ENCODE measurements at regions of chr19 and their contacts with region 1.

Region 1: DNA sequence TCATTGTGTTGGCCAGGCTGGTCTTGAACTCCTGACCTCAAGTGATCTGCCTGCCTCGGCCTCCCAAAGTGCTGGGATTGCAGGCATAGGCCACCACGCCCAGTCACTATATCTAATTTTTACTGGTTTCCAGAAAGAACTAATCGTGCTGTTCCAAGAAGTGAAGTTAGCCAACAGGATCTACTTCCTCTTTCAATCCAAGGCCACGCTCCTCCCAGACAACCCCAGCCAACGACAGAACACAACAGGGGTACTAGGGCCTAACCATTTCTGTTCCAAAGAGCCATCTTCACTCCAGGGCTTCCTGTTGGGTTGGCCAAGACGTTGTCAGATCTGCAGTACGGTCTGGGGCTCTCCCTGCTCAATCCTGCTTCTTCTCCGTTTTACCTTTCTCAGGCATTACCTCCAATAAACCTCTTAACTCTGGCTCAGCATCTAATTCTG is 7.0 kb upstream of the LSM14A start:
- DNase-seq: no peak
- ATAC-seq: no peak
- H3K4me3 ChIP-seq: no peak overlapping the region
- H3K4me3 Mint-ChIP-seq: no peak overlapping the region
- H3K27ac ChIP-seq: no peak overlapping the region
- H3K27ac Mint-ChIP-seq: no peak overlapping the region
- H3K4me1 ChIP-seq: no peaks in the 10 kb centered on the region
- H3K4me1 Mint-ChIP-seq: peaks cover 0 to under 1% (median 0%) of the 10 kb centered on the region in 3 donors
- H3K27me3 ChIP-seq: peaks cover 0 to 3% of the 10 kb centered on the region in 2 experiments
- H3K27me3 Mint-ChIP-seq: no peaks in the 10 kb centered on the region

Region 2: GRCh38 chr19:34201133-34201532 is 35.8 kb after region 1 on chr19:
- CTCF ChIA-PET with region 1: interaction called in 1 of 2 experiments, 4 read pairs
- POLR2A ChIA-PET with region 1: interaction called in 1 of 2 experiments, 15 read pairs
- DNase-seq: no peak
- ATAC-seq: no peak
- H3K4me3 ChIP-seq: no peak overlapping the region
- H3K4me3 Mint-ChIP-seq: no peak overlapping the region
- H3K27ac ChIP-seq: no peak overlapping the region
- H3K27ac Mint-ChIP-seq: peak overlapping the region; percentile 15 to 59
- H3K4me1 ChIP-seq: no peaks in the 10 kb centered on the region
- H3K4me1 Mint-ChIP-seq: peaks cover 9 to 17% (median 10%) of the 10 kb centered on the region in 3 donors
- H3K27me3 ChIP-seq: no peaks in the 10 kb centered on the region
- H3K27me3 Mint-ChIP-seq: no peaks in the 10 kb centered on the region

Region 3: DNA sequence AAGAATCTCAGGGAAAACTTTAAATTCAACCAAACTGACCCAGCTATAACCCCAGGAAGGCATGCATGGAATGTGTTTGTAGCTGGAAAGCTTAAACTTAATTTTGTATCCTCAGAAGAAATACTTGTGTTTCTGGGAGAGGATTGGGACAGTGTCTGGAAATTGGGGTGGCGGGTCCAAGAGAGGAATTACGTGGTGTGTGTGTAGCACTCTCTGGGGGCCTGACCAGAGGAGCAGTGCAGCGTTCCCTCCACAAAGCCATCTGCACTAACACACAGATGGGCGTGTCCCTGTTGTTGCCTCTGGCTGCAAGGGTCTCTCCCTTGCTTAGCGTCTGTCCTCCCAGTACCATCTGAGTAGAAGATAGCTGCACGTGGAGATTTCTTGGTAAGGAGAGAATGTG is 95.5 kb after region 1 on chr19:
- CTCF ChIA-PET with region 1: no interaction called
- POLR2A ChIA-PET with region 1: no interaction called
- DNase-seq: no peak
- ATAC-seq: no peak
- H3K4me3 ChIP-seq: no peak overlapping the region
- H3K4me3 Mint-ChIP-seq: no peak overlapping the region
- H3K27ac ChIP-seq: no peak overlapping the region
- H3K27ac Mint-ChIP-seq: peak overlapping the region; percentile 38 to 73
- H3K4me1 ChIP-seq: peaks cover 20 to 37% of the 10 kb centered on the region in 2 experiments
- H3K4me1 Mint-ChIP-seq: peaks cover 68 to 73% (median 71%) of the 10 kb centered on the region in 3 donors
- H3K27me3 ChIP-seq: no peaks in the 10 kb centered on the region
- H3K27me3 Mint-ChIP-seq: no peaks in the 10 kb centered on the region

Measured in T-cell (primary cell).